Transverse colon (tissue), 4 donors: ENCODE measurements at regions of chr9 and their contacts with region 1.

Region 1: DNA sequence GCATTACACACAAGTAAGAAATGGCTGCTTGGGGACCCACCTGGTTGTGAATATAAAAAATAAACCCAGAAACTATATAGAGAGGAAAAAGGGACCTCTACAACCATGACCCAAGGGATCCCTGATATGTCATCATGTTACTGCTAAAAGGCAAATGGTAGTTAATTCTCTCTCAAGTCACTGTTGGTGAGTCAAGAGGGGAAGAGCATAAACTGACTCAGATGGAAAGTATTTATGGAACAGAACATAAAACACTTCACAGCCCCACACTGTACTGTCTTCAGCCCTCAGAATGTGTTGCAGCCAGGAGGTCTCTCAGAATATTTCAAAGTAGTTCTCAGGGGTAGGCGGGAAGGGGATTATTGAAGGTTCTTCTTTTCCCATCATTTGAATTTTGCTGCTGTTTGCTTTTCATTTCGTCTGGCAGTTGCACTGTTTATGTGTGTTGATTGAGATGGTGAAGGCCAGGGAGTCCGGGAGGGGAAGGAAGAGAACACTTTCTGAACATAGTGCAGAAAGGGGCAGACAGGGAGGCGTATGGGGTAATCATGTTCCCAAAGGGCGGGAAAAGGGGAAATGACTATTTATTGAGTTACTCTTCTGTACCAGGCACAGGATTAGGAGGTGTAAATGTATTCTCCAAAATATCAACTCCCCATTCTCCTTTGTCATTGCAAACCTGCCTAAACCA is 85.5 kb downstream of the TEK start:
- DNase-seq: no peak
- H3K4me3 ChIP-seq: no peak overlapping the region
- H3K27ac ChIP-seq: peak overlapping the region in 3 of 4 donors; percentile 4 to 45 (median 23)
- H3K4me1 ChIP-seq: peaks cover 0 to 18% (median 2%) of the 10 kb centered on the region in 4 donors
- H3K27me3 ChIP-seq: no peaks in the 10 kb centered on the region
- CTCF ChIP-seq: no peak
- EP300 ChIP-seq: no peak
- POLR2A ChIP-seq: no peak

Region 2: DNA sequence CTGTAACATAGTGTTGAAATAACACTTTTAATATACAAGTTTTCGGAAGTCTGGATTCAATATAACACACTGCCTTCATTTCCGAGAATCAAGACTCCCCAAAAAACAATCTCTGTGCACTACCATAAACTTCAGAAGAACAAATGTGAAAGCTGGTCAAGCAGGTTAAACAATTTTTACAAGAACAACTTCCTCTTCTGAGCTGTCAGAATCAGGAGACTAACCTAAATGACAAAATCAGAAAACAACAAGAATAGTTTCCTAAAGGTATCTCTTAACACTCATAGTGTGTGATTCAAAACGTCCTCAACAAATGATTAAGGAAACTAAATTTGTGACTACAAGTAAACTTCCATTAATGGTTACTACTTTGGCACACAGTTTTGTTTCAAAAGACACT is 367.1 kb after region 1 on chr9:
- in situ Hi-C with region 1: no loop called
- intact Hi-C with region 1: loop called (anchors 10 kb)
- DNase-seq: no peak
- H3K4me3 ChIP-seq: no peak overlapping the region
- H3K27ac ChIP-seq: no peak overlapping the region
- H3K4me1 ChIP-seq: peaks cover 0 to 13% (median 6%) of the 10 kb centered on the region in 4 donors
- H3K27me3 ChIP-seq: no peaks in the 10 kb centered on the region
- CTCF ChIP-seq: no peak
- EP300 ChIP-seq: no peak
- POLR2A ChIP-seq: no peak

Region 3: DNA sequence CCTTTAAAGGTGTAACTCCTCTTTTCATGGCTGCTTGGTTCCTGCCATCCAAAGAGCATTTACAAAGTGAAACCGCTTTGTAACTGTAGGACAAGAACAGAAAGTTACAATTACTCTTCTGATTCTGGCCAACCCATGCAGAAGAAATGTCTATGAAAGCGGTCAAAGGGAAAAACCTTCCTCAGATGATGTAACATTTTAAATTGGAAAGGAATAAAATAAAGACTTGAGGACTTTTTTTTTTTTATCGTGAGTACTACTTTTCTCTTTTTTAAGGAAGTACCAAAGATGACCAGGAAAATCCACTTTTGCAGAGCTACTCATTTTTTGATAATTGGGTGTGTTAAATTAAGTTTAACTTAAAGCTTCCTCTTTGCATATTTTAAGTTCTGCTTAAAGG is 391.8 kb after region 1 on chr9:
- in situ Hi-C with region 1: no loop called
- intact Hi-C with region 1: no loop called
- DNase-seq: no peak
- H3K4me3 ChIP-seq: no peak overlapping the region
- H3K27ac ChIP-seq: no peak overlapping the region
- H3K4me1 ChIP-seq: no peaks in the 10 kb centered on the region
- H3K27me3 ChIP-seq: no peaks in the 10 kb centered on the region
- CTCF ChIP-seq: no peak
- EP300 ChIP-seq: no peak
- POLR2A ChIP-seq: no peak